ENCODE measurements at regions of chr9 and their contacts with region 1.

Region 1: DNA sequence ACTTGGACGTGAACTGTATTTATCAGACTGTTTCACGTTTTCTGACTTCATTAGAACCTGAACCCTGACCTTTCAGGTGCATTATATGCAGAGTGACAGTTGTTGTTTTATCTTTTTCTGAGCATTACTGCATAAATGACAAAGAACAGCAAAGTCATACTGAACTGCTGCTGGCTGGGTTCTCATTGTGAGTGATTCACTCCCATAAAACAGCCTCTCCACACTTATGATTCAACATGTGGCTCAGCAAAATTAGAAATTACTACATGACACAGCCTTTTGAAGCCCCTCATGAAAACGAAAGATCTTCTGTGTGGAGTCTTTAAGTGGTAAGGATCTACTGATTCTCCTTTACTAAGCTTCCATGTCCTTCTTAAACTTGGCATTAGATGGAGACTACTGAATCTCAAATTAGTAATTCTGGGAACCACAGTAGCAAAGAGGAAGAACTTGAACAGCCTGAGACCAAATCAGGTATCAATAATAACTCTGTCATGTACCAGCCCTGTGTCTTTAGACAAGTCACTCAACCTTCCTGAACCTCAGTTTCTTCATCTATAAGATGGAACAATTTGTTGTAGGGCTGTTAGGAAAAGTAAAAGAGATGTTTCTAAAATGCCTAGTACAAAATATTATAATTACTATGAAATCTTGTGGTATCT is 172.3 kb upstream of the GNA14 start:
- DNase-seq: peak in 1 of 2 experiments; percentile 61
- H3K4me3 ChIP-seq: no peak overlapping the region
- H3K27ac ChIP-seq: peak overlapping the region; percentile 80
- H3K4me1 ChIP-seq: peaks cover 15% of the 10 kb centered on the region
- H3K27me3 ChIP-seq: no peaks in the 10 kb centered on the region
- CTCF ChIP-seq: no peak

Region 2: DNA sequence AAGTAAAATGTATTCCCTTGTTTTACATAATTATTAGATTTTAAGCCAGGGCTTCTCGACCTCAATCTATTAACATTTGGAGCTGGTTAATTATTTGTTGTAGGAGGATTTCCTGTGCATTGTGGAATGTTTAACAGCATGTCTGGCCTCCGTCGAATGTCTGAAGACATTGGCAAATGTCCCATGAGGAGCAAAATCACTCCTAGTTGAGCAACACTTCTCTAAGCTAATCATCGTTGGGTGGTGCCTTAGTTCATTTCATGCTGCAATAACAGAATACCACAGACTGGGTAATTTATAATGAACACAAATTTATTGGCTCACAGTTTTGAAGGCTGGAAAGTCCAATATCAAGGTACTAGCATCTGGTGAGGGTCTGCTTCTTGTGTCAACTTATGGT is 656.5 kb before region 1 on chr9:
- CTCF ChIA-PET with region 1: interaction called, 17 read pairs
- POLR2A ChIA-PET with region 1: no interaction called
- intact Hi-C with region 1: no loop called
- DNase-seq: no peak
- H3K4me3 ChIP-seq: no peak overlapping the region
- H3K27ac ChIP-seq: no peak overlapping the region
- H3K4me1 ChIP-seq: no peaks in the 10 kb centered on the region
- H3K27me3 ChIP-seq: no peaks in the 10 kb centered on the region
- CTCF ChIP-seq: no peak

Region 3: GRCh38 chr9:77513457-77513856 is 307.0 kb before region 1 on chr9:
- CTCF ChIA-PET with region 1: interaction called, 10 read pairs
- POLR2A ChIA-PET with region 1: no interaction called
- intact Hi-C with region 1: no loop called
- DNase-seq: no peak
- H3K4me3 ChIP-seq: no peak overlapping the region
- H3K27ac ChIP-seq: no peak overlapping the region
- H3K4me1 ChIP-seq: no peaks in the 10 kb centered on the region; the same call in 1 of the 2 replicates
- H3K27me3 ChIP-seq: no peaks in the 10 kb centered on the region
- CTCF ChIP-seq: no peak

Measured in PC-9 (cell line).